OCI-LY7 (cell line): ENCODE measurements at regions of chr3 and their contacts with region 1.

Region 1: DNA sequence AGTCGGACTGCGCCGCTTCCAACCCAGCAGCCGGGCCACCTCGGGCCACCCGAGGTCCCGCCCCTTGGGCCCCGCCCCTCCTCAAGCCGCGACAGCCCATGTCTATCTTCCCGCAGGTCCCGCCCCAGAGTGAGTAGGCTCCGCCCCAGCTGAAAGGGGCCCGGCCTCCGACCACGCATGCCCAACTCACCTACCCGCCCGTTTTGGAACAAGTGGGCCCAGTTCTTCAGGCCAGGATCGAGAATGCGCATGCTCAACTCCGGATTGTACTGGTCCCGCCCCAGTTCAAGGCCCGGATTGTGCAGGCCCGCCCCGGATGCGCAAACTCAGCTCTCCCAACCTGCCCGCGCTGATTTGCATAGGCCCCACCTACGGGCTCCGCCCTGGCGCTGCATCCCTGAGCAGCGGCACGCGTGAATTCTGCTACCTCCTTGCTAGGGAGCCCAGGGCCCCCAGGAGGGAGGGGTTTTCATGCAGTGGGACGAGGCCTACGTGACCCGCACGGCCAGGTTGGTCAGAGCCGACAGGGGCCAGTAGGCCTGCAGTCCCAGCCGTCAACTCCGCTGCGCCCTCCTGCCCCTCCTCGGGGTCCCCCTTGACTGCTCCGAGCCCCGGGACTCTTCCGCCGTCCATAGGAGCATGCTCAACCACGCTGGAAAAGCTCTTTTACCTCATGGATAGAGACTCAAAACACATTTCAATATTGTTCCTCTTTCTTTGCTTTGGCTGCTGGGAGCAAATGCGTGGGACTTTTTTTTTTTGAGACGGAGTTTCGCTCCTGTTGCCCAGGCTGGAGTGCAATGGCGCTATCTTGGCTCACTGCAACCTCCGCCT is at the start of gene PFKFB4:
- DNase-seq: peak; percentile 99
- H3K4me3 ChIP-seq: peak within 1 kb of the TSS; percentile 77
- H3K27ac ChIP-seq: peak within 1 kb of the TSS; percentile 80
- H3K4me1 ChIP-seq: peaks cover 54% of the 10 kb centered on the region
- CTCF ChIP-seq: no peak
- total RNA-seq, gene PFKFB4: 3.8 and 5.0 TPM in 2 replicates

Region 2: DNA sequence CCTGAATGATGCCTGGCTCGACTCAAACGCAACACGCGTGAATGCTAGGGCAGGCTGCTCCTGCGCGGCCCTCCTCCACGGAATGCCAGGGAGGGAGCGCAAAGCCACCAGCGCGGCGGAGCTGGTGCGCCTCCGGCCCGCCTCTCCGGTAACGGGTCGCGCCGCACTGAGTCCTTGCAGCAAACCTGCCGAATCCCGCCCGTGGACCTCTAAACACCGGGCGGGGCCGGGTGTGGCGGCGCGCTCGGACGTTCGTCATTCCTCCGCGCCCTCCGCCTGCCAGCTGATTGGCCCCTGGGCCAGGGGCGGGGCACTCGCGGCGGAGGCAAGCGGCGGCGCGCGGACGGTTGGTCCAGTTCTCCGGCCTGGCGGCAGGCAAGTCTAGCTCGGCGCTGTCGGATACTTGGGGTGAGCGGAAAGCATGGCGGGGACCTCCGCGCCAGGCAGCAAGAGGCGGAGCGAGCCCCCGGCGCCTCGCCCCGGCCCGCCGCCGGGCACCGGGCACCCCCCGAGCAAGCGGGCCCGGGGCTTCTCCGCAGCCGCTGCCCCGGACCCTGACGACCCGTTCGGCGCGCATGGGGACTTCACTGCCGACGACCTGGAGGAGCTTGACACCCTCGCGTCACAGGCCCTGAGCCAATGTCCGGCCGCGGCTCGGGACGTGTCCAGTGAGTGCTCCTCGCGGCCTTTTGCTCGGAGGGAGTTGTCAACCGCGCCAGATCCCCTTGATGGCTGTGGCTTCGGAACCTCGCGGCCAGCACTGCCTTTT is 110.4 kb before region 1 on chr3 and contains the start of gene ATRIP:
- CTCF ChIA-PET with region 1: no interaction called
- POLR2A ChIA-PET with region 1: no interaction called
- intact Hi-C with region 1: loop called (anchors 2 kb)
- DNase-seq: peak; percentile 91
- H3K4me3 ChIP-seq: peak within 1 kb of the TSS; percentile 92
- H3K27ac ChIP-seq: peak within 1 kb of the TSS; percentile 43
- H3K4me1 ChIP-seq: peaks cover 30% of the 10 kb centered on the region
- CTCF ChIP-seq: no peak
- total RNA-seq, gene ATRIP: 16.3 and 16.8 TPM in 2 replicates

Region 3: DNA sequence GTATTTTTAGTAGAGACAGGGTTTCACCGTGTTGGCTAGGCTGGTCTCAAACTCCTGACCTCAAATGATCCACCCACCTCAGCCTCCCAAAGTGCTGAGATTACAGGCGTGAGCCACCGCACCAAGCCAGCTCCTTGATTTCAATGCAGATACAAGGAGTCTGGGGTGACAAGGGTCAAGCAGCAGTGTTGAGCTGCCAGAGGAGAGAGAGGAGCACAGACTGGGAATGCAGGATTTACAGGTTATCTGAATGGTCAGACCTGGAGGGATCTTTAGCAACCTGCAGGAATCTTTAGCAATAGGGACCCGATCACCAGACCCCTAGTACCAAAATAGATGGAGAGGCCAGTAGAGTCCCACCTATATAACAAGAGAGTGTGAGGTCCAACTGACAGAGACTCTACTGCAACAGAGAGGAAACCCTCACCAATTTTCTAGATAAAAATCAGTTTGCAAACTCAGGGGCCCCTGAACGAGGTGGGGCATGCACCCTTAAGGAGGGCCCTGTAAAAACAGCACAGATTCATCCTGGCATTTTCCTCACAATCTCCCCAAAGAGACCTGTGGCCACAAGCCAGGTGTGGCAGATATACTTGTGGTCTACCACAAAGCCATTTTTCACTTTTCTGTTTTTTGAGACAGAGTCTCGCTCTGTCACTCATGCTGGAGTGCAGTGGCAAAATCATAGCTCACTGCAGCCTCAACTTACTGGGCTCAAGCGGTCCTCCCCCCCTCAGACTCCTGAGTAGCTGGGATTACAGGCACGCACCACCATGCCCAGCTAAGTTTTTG is 42.4 kb before region 1 on chr3:
- CTCF ChIA-PET with region 1: no interaction called
- POLR2A ChIA-PET with region 1: no interaction called
- intact Hi-C with region 1: loop called (anchors 2 kb)
- DNase-seq: peak; percentile 73
- H3K4me3 ChIP-seq: no peak overlapping the region
- H3K27ac ChIP-seq: peak overlapping the region; percentile 21
- H3K4me1 ChIP-seq: peaks cover 18% of the 10 kb centered on the region
- CTCF ChIP-seq: no peak